ENCODE measurements at regions of chr15 and their contacts with region 1.

Region 1: GRCh38 chr15:35444557-35445204 is 101.3 kb downstream of the DPH6 start:
- DNase-seq: peak; percentile 11
- ATAC-seq: peak; percentile 66
- H3K4me3 ChIP-seq: no peak overlapping the region
- H3K27ac ChIP-seq: no peak overlapping the region
- H3K4me1 ChIP-seq: no peaks in the 10 kb centered on the region
- H3K27me3 ChIP-seq: no peaks in the 10 kb centered on the region
- CTCF ChIP-seq: peak; percentile 71 to 85 (median 75)
- EP300 ChIP-seq: no peak
- POLR2A ChIP-seq: no peak
- RAD21 ChIP-seq: peak; percentile 94

Region 2: GRCh38 chr15:35136321-35137189 is 308.1 kb before region 1 on chr15:
- CTCF ChIA-PET with region 1: interaction called, 5 read pairs
- POLR2A ChIA-PET with region 1: no interaction called
- RAD21 ChIA-PET with region 1: no interaction called
- SMC1A ChIA-PET with region 1: interaction called, 11 read pairs
- in situ Hi-C with region 1: no loop called
- intact Hi-C with region 1: no loop called
- DNase-seq: peak; percentile 94
- ATAC-seq: peak; percentile 99
- H3K4me3 ChIP-seq: no peak overlapping the region
- H3K27ac ChIP-seq: peak overlapping the region; percentile 77; the same call in 1 of the 2 replicates
- H3K4me1 ChIP-seq: peaks cover 10% of the 10 kb centered on the region
- H3K27me3 ChIP-seq: no peaks in the 10 kb centered on the region
- CTCF ChIP-seq: no peak
- EP300 ChIP-seq: peak; percentile 99
- POLR2A ChIP-seq: no peak
- RAD21 ChIP-seq: 0 out of 2 replicates have a peak, but pooled peaks have one; percentile 0

Region 3: DNA sequence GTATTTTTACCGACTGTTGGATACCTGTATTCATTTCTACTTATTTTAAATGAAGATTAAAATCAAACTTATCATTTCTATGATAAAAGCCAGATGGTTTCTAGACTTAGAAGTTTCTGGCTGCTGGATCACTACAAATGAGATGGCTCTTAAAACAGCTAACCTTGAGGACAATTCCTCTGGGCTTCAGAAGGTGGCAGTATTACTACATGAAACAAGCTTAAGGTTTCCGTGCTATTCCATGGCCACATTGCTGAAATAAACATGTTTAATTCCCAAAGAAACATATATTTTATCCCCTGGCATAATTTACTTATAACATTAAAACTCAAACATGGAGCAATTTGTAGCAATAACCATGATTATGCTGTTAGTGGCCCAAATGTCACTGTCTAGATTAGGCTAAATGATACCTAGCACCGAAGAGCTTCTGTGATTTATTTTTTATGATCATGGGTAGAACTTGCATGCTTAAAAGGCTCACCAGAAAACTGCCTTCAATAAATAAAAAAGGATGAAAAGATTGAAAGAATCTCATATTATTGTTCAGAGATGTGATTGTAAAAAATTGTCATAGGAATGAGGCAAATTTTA is 155.6 kb before region 1 on chr15:
- CTCF ChIA-PET with region 1: interaction called, 199 read pairs
- POLR2A ChIA-PET with region 1: no interaction called
- RAD21 ChIA-PET with region 1: interaction called, 100 read pairs
- SMC1A ChIA-PET with region 1: interaction called, 108 read pairs
- in situ Hi-C with region 1: loop called (anchors 5 kb)
- intact Hi-C with region 1: loop called (anchors 1 kb)
- DNase-seq: no peak
- ATAC-seq: peak; percentile 75
- H3K4me3 ChIP-seq: no peak overlapping the region
- H3K27ac ChIP-seq: no peak overlapping the region
- H3K4me1 ChIP-seq: no peaks in the 10 kb centered on the region
- H3K27me3 ChIP-seq: no peaks in the 10 kb centered on the region
- CTCF ChIP-seq: peak; percentile 70 to 77 (median 71)
- EP300 ChIP-seq: no peak
- POLR2A ChIP-seq: no peak
- RAD21 ChIP-seq: peak; percentile 88

Region 4: DNA sequence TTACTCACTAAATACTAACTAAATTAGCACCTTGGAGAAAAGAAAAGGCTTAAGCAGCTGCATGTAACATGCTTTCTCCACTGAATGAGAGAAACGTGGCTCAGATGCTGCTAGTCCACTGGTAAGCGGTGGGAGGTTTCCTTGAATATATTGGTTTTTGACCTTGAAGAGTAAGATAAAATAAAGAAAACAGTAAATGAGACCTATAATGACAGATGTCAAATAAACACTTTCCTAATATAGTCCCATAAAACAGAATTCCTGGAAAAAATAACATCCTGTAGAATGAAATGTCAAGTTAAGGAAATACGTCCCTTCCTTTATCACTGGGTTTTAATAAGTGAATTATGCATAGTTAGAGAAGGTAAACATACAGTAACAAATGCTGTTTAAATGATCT is 113.8 kb before region 1 on chr15:
- CTCF ChIA-PET with region 1: no interaction called
- POLR2A ChIA-PET with region 1: no interaction called
- RAD21 ChIA-PET with region 1: no interaction called
- SMC1A ChIA-PET with region 1: no interaction called
- in situ Hi-C with region 1: no loop called
- intact Hi-C with region 1: no loop called
- DNase-seq: no peak
- ATAC-seq: no peak
- H3K4me3 ChIP-seq: no peak overlapping the region
- H3K27ac ChIP-seq: no peak overlapping the region
- H3K4me1 ChIP-seq: no peaks in the 10 kb centered on the region
- H3K27me3 ChIP-seq: no peaks in the 10 kb centered on the region
- CTCF ChIP-seq: no peak
- EP300 ChIP-seq: no peak
- POLR2A ChIP-seq: no peak
- RAD21 ChIP-seq: no peak

Region 5: GRCh38 chr15:35466476-35466875 is 21.8 kb after region 1 on chr15:
- CTCF ChIA-PET with region 1: interaction called, 64 read pairs
- POLR2A ChIA-PET with region 1: no interaction called
- RAD21 ChIA-PET with region 1: interaction called, 3 read pairs
- SMC1A ChIA-PET with region 1: interaction called, 5 read pairs
- in situ Hi-C with region 1: no loop called
- intact Hi-C with region 1: no loop called
- DNase-seq: no peak
- ATAC-seq: no peak
- H3K4me3 ChIP-seq: no peak overlapping the region
- H3K27ac ChIP-seq: no peak overlapping the region
- H3K4me1 ChIP-seq: no peaks in the 10 kb centered on the region
- H3K27me3 ChIP-seq: no peaks in the 10 kb centered on the region
- CTCF ChIP-seq: no peak
- EP300 ChIP-seq: no peak
- POLR2A ChIP-seq: no peak
- RAD21 ChIP-seq: no peak

Region 6: GRCh38 chr15:35545824-35546510 is 101.3 kb after region 1 on chr15 and contains the start of gene DPH6:
- CTCF ChIA-PET with region 1: interaction called, 10 read pairs
- POLR2A ChIA-PET with region 1: no interaction called
- RAD21 ChIA-PET with region 1: no interaction called
- SMC1A ChIA-PET with region 1: interaction called, 3 read pairs
- in situ Hi-C with region 1: no loop called
- intact Hi-C with region 1: no loop called
- DNase-seq: peak; percentile 46
- ATAC-seq: peak; percentile 93
- H3K4me3 ChIP-seq: peak within 1 kb of the TSS; percentile 60
- H3K27ac ChIP-seq: peak within 1 kb of the TSS; percentile 98
- H3K4me1 ChIP-seq: peaks cover 4% of the 10 kb centered on the region; the same call in 1 of the 2 replicates
- H3K27me3 ChIP-seq: no peaks in the 10 kb centered on the region
- CTCF ChIP-seq: 0 out of 6 replicates have a peak, but pooled peaks of 1 of the 3 experiments have one; percentile 5
- EP300 ChIP-seq: no peak; a peak in 1 of 4 replicates
- POLR2A ChIP-seq: peak; percentile 91; the same call in 1 of the 2 replicates
- RAD21 ChIP-seq: no peak
- polyA plus RNA-seq, gene DPH6: 56.0 to 68.5 TPM

Measured in GM12878 (cell line).